ENCODE measurements at regions of chr17 and their contacts with region 1.

Region 1: DNA sequence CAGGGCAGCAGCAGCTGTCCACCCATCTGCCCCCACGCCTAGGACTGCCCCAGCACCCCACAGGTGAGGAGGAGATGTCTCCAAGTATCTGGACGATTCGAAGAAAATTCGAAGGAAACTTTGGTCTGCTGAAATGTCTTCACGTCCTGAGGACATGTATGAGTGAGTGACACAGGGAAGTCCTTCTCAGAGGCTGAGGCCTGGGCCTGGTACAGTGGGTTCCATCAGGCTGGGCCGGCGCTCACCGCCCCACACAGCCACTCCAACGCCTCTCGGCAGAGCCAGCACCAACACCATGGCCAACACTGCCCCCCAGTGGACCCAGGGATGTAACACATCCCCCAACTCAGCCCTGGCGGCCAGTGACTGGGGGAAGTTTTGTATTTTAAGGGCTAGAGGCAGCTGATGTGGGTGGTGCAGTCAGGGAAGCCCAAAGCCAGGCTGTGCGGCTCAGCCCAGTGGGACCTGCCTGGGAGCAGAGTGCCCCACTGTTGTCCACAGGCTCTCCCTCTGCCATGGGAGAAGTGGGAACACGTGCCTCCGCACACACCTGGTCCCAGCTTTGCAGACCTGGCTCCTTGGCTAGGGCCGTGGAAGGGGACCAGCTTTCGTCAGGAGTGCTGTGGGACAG is 55.8 kb upstream of the FASN start:
- DNase-seq: peak; percentile 91
- ATAC-seq: peak; percentile 98
- H3K4me3 Mint-ChIP-seq: no peak overlapping the region
- H3K27ac Mint-ChIP-seq: no peak overlapping the region
- H3K4me1 Mint-ChIP-seq: peaks cover 7% of the 10 kb centered on the region
- H3K27me3 Mint-ChIP-seq: no peaks in the 10 kb centered on the region

Region 2: GRCh38 chr17:81959362-81960129 is 194.3 kb before region 1 on chr17:
- CTCF ChIA-PET with region 1: interaction called, 3 read pairs
- POLR2A ChIA-PET with region 1: no interaction called
- intact Hi-C with region 1: loop called in 1 of 2 experiments (anchors 2 kb)
- DNase-seq: peak; percentile 86
- ATAC-seq: peak; percentile 90
- H3K4me3 Mint-ChIP-seq: peak overlapping the region; percentile 38
- H3K27ac Mint-ChIP-seq: no peak overlapping the region
- H3K4me1 Mint-ChIP-seq: no peaks in the 10 kb centered on the region
- H3K27me3 Mint-ChIP-seq: peaks cover 11% of the 10 kb centered on the region

Region 3: DNA sequence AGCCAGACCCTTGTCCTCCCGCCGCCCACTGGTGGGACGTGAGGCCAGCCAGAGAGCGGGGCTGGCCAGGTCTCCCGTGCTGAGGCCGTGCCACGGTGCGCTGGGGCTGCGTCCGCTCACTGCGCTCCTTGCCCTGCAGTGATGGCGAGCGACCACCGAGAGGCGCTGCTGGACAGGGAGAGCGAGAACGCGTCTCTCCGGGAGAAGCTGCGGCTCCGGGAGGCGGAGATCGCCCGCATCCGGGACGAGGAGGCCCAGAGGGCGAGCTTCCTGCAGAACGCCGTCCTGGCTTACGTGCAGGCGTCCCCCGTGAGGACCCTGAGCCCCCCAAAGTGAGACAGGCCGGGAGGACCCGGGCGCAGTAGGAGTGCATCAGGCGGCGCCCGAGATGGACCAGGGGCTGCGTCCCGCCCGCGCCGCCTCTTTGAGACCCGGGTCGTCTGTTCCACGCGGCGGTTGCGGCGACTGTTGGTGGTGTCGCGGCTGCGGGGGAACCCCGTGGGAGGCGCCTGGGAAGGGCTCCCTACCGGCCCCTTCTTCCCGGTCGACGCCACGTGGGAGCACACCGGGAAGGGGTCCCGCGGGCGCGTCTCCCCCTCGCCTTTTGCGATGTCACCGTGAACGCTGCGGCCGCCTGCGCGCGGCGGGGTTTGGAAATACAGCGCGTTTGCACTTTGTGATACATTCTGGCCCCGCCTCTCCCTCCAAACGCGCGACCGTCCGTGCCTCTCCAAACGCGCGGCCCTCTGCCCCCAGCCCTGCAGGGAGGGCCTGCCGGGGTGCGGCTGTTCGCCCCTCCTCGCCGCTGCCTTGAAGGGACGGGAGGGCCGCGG is 123.2 kb before region 1 on chr17:
- CTCF ChIA-PET with region 1: interaction called, 35 read pairs
- POLR2A ChIA-PET with region 1: no interaction called
- intact Hi-C with region 1: loop called (anchors 1 kb)
- DNase-seq: peak; percentile 92
- ATAC-seq: peak; percentile 79
- H3K4me3 Mint-ChIP-seq: peak overlapping the region; percentile 67
- H3K27ac Mint-ChIP-seq: no peak overlapping the region
- H3K4me1 Mint-ChIP-seq: peaks cover 13% of the 10 kb centered on the region
- H3K27me3 Mint-ChIP-seq: no peaks in the 10 kb centered on the region

Region 4: GRCh38 chr17:82105882-82106687 is 47.8 kb before region 1 on chr17:
- CTCF ChIA-PET with region 1: interaction called, 5 read pairs
- POLR2A ChIA-PET with region 1: no interaction called
- intact Hi-C with region 1: loop called in 1 of 2 experiments (anchors 5 kb)
- DNase-seq: peak; percentile 81
- ATAC-seq: peak; percentile 82
- H3K4me3 Mint-ChIP-seq: peak overlapping the region; percentile 84
- H3K27ac Mint-ChIP-seq: peak overlapping the region; percentile 96
- H3K4me1 Mint-ChIP-seq: peaks cover 43% of the 10 kb centered on the region
- H3K27me3 Mint-ChIP-seq: no peaks in the 10 kb centered on the region

Region 5: DNA sequence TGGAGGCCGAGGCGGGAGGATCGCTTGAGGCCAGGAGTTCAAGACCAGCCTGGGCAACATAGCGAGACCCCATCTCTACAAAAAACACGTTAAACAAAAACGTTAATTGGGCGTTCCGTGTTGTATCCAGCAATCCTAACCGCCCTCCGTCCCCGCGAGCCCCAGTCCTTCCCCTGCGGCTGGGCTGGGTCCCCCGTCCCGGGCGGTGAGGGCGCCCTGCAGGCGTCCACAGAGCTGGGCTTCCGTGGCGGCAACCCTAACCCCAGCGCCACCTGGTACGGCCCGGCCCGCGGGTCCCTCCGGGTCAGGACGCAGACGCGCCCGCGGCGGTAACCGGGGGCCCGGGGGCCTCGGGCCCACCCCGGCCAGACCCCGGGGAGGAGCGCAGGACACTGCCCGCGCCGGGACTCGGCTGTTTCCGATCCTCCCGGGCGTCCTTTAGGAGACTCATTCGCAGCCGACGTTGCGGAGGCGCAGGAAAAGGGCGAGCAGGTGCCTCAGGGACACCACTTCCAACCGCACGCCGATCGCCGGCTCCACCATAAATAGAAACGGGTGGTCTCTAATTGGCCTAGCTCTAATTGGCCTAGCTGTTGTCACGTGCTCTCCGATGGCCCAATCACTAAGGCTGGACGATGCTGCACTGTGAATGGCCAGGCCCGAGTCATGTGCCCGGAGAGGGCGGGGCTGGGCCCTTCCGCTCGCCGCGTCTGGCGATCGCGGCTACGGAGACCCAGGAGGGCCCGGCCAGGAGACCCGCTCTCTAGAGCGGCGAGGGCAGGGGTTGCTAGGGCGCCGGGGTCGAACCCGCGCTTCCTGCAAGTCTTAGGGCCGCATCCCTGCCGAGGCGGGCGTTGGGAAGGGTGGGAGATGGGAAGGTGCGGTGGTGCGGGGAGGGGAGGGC is 138.6 kb after region 1 on chr17:
- CTCF ChIA-PET with region 1: no interaction called
- POLR2A ChIA-PET with region 1: no interaction called
- intact Hi-C with region 1: no loop called
- DNase-seq: peak; percentile 96
- ATAC-seq: peak; percentile 89
- H3K4me3 Mint-ChIP-seq: peak overlapping the region; percentile 78
- H3K27ac Mint-ChIP-seq: peak overlapping the region; percentile 85
- H3K4me1 Mint-ChIP-seq: peaks cover 71% of the 10 kb centered on the region
- H3K27me3 Mint-ChIP-seq: no peaks in the 10 kb centered on the region